Left cardiac atrium (tissue), 4 donors: ENCODE measurements at regions of chr2 and their contacts with region 1.

Region 1: GRCh38 chr2:68715353-68716041 is 19.1 kb upstream of the ARHGAP25 start:
- DNase-seq: peak; percentile 43
- ATAC-seq: peak; percentile 61 to 64

Region 2: GRCh38 chr2:68467077-68467960 is 248.2 kb before region 1 on chr2 and contains the starts of genes APLF and FBXO48:
- intact Hi-C with region 1: loop called in 1 of 2 experiments (anchors 10 kb)
- DNase-seq: peak; percentile 98
- ATAC-seq: peak; percentile 98 to 99
- total RNA-seq, gene APLF: 4.6 to 5.5 TPM
- total RNA-seq, gene FBXO48: 0.60 to 1.4 TPM

Region 3: DNA sequence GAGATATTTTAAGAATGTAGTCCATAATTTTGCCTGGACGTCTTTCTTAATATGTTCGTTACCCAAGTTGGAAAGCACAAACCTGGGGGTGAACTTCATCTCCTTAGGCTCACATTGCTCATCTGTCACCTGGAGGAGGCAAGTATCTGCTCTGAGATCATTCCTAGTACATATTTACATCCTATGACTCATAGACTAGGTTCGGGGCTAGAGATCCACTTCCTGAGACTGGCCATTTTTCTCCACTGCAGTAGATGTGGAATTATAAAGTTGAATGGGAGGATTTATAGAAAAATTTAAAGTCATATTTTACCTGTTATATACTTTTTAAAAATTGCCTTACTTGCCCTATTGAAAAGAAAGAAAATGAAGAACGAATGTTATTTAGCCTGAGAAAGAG is 149.6 kb before region 1 on chr2:
- intact Hi-C with region 1: no loop called
- DNase-seq: no peak
- ATAC-seq: no peak

Region 4: GRCh38 chr2:69428981-69429380 is 713.5 kb after region 1 on chr2:
- intact Hi-C with region 1: no loop called
- DNase-seq: no peak
- ATAC-seq: no peak

Region 5: DNA sequence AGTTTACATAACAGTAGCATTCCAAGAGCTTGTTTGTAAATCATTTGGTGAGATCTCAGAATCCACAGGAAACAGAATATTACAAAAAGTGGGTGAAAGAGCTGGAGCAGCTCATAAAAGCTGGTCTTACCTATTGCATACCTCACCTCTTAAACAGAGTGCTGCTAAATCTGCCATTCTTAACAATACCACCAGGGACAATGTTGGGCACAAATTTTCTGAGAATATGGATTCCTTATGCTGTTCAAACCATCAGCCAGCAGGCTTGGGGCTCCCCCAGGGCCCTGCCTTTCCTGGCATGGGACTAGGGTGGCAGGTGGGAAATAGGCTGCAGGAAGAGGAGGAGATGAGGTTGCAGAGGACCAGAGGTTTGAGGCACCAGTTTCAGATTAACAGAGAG is 1782.6 kb after region 1 on chr2:
- intact Hi-C with region 1: no loop called
- DNase-seq: no peak
- ATAC-seq: no peak